Right lobe of liver (tissue), 6 donors: ENCODE measurements at regions of chr17 and their contacts with region 1.

Region 1: DNA sequence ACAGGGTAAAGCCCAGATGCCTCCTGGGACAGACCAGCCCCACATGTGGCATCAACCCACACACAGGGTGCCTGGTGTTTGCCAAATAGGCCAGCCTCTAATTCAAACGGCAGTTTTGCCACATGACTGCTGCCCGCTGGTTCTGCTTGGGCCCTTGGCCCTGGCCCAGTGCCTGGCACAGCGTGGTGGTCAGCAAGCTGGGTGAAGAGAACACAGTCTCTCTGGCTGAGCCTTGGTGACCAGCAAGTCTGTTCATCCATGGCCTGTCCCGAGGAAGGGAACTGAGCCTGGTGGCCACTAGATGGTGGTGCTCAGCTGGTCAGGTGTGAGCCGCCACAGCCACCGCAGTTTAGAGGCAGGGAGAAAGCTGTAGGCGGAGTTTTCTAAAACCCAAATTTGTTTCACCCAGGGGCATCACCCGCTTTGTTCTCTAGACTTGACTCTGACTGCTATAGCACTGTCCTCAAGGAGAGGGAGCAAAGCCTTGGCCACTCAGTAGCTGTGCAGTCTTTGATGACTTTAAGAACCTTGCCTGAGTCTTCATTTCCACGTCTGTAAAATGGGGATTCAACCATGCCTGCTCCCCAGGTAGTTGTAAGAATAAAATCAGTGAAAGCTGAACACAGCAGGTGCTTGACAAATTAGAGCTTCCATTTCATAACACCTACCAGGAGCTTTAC is 4.7 kb upstream of the GFAP start:
- DNase-seq: peak; percentile 82 to 84 (median 84)
- ATAC-seq: peak; percentile 93 to 98 (median 94)
- H3K4me3 ChIP-seq: no peak overlapping the region
- H3K27ac ChIP-seq: no peak overlapping the region
- H3K4me1 ChIP-seq: no peaks in the 10 kb centered on the region
- H3K27me3 ChIP-seq: no peaks in the 10 kb centered on the region
- CTCF ChIP-seq: peak; percentile 77 to 92 (median 88)
- POLR2A ChIP-seq: no peak

Region 2: DNA sequence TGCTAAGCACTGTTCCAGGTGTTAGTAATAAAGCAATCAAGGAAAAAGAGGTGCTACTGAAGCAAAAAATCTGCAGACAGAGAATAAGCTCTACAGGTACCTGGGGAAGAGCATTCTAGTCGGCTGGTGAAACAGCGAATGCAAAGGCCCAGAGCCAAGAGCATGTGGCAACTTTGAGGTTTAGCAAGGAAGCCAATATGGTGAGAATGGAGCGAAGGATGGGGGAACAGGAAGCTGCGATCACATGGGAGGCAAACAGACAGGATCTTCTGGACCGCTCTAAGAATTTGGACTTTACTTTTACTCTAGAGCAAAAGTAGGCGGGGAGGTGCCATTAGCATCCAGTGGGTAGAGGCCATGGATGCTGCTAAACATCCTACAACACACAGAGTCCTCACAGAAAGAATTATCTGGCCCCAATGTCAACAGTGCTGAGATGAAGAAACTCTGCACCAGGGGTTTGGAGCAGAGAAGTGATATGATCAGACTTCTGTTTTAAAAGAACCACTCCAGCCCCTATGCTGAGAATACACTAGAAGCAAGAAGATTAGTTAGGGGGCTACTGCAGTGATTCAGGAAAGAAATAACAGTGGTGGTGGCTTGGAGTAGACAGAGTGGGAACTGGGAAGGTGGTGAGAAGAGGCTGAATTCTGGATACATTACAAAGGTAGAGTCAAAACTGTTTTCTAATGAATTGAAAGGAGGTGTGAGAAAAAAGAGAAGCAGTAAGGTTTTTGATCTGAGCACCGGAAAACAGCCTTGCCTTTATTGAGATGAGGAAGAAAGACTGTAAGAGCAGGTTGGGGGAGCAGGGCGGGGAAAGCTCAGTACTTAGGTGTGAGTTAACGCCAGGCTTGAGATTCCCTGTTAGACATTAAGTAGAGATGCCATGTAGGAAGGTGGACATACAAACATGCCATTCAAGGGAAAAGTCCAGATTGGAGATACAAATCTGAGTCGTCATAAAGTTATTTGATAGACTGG is 31.8 kb before region 1 on chr17:
- intact Hi-C with region 1: no loop called
- DNase-seq: no peak
- ATAC-seq: peak in 1 of 4 donors; percentile 25
- H3K4me3 ChIP-seq: no peak overlapping the region
- H3K27ac ChIP-seq: no peak overlapping the region
- H3K4me1 ChIP-seq: peaks cover 0 to 6% (median 0%) of the 10 kb centered on the region in 4 donors
- H3K27me3 ChIP-seq: no peaks in the 10 kb centered on the region
- CTCF ChIP-seq: no peak
- POLR2A ChIP-seq: no peak

Region 3: GRCh38 chr17:45021607-45022287 is 101.7 kb after region 1 on chr17:
- intact Hi-C with region 1: loop called (anchors 2 to 5 kb)
- DNase-seq: peak; percentile 75 to 80 (median 77)
- ATAC-seq: peak; percentile 79 to 89 (median 83)
- H3K4me3 ChIP-seq: peak overlapping the region; percentile 23 to 54 (median 41)
- H3K27ac ChIP-seq: peak overlapping the region; percentile 2 to 49 (median 42)
- H3K4me1 ChIP-seq: peaks cover 0 to 30% (median 6%) of the 10 kb centered on the region in 4 donors
- H3K27me3 ChIP-seq: no peaks in the 10 kb centered on the region
- CTCF ChIP-seq: peak; percentile 93 to 98 (median 96)
- POLR2A ChIP-seq: no peak

Region 4: GRCh38 chr17:45123930-45124796 is 204.1 kb after region 1 on chr17:
- intact Hi-C with region 1: loop called (anchors 10 kb)
- DNase-seq: no peak
- ATAC-seq: peak in 1 of 4 donors; percentile 55
- H3K4me3 ChIP-seq: no peak overlapping the region
- H3K27ac ChIP-seq: no peak overlapping the region
- H3K4me1 ChIP-seq: no peaks in the 10 kb centered on the region
- H3K27me3 ChIP-seq: no peaks in the 10 kb centered on the region
- CTCF ChIP-seq: no peak
- POLR2A ChIP-seq: no peak